B cell (primary cell): ENCODE measurements at regions of chr5 and their contacts with region 1.

Region 1: GRCh38 chr5:44808435-44809214 is at the start of gene MRPS30:
- DNase-seq: peak; percentile 97
- ATAC-seq: peak; percentile 96
- H3K4me3 ChIP-seq: peak within 1 kb of the TSS; percentile 50 to 96 (median 87)
- H3K4me3 Mint-ChIP-seq: peak within 1 kb of the TSS; percentile 86
- H3K27ac ChIP-seq: peak within 1 kb of the TSS; percentile 71 to 84
- H3K27ac Mint-ChIP-seq: peak within 1 kb of the TSS; percentile 88
- H3K4me1 ChIP-seq: peaks cover 11 to 13% of the 10 kb centered on the region in 2 donors
- H3K4me1 Mint-ChIP-seq: peaks cover 30% of the 10 kb centered on the region
- H3K27me3 ChIP-seq: no peaks in the 10 kb centered on the region
- H3K27me3 Mint-ChIP-seq: no peaks in the 10 kb centered on the region
- CTCF ChIP-seq: peak; percentile 45
- total RNA-seq, gene MRPS30: 46.1 and 50.2 TPM in 2 replicates

Region 2: DNA sequence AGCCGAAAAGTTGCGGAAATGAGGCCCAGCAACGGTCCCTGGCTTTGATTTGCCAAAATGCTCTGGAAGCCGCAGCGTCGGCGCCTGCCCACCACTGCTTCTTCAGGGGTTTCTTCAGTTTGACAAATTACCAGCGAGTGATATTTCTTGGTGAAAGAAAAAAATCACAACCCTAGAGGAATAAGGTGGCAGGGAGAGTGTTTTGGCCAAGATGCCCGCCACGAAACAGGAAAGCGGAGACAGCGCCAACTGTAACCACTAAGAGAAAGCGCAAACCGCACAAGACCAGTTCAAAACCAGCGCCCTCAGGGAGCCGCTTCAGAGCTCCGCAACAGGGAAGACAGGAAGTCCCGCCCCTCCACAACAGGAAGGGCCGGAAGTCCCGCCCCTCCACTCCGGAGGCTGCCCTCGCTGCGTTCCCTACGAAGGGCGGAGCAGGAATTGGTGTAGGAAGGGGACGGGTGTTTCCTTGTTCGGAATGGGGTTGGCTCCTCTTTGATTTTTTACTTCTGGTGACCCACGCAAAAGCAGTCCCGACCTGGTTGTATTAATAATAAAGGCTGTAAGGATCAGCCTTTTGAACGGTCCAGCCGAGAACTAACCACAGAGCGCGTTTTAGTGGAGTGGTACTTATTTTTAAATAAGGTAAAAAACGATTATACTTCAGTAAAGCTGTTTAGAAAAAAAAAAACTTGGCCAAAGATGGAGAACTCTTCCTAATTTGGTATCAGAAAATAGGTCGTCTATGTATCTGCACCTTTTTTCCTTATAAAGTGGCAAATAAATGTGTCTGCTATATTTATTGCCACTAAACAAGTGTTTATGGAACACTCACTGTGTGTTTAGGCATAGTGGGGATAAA is 1293.6 kb before region 1 on chr5 and contains the start of gene C5orf34:
- CTCF ChIA-PET with region 1: no interaction called
- POLR2A ChIA-PET with region 1: no interaction called
- intact Hi-C with region 1: loop called (anchors 1 kb)
- DNase-seq: peak; percentile 93
- ATAC-seq: peak; percentile 99
- H3K4me3 ChIP-seq: peak within 1 kb of the TSS; percentile 78 to 93 (median 88)
- H3K4me3 Mint-ChIP-seq: peak within 1 kb of the TSS; percentile 94
- H3K27ac ChIP-seq: peak within 1 kb of the TSS; percentile 85 to 93
- H3K27ac Mint-ChIP-seq: peak within 1 kb of the TSS; percentile 88
- H3K4me1 ChIP-seq: peaks cover 12 to 18% of the 10 kb centered on the region in 2 donors
- H3K4me1 Mint-ChIP-seq: peaks cover 23% of the 10 kb centered on the region
- H3K27me3 ChIP-seq: no peaks in the 10 kb centered on the region
- H3K27me3 Mint-ChIP-seq: no peaks in the 10 kb centered on the region
- CTCF ChIP-seq: no peak
- total RNA-seq, gene C5orf34: 5.1 and 5.5 TPM in 2 replicates